ENCODE measurements at regions of chr6 and their contacts with region 1.

Region 1: GRCh38 chr6:8063761-8064637 is at the start of gene BLOC1S5:
- DNase-seq: peak; percentile 95 to 98 (median 97)
- H3K4me3 ChIP-seq: peak within 1 kb of the TSS; percentile 60 to 86 (median 80)
- H3K4me3 Mint-ChIP-seq: peak within 1 kb of the TSS; percentile 93 to 95
- H3K27ac ChIP-seq: peak within 1 kb of the TSS; percentile 73 to 94
- H3K27ac Mint-ChIP-seq: peak within 1 kb of the TSS; percentile 90 to 98 (median 97)
- H3K4me1 ChIP-seq: peaks cover 9 to 15% of the 10 kb centered on the region in 2 donors
- H3K4me1 Mint-ChIP-seq: peaks cover 10% of the 10 kb centered on the region
- H3K27me3 ChIP-seq: no peaks in the 10 kb centered on the region
- H3K27me3 Mint-ChIP-seq: peaks cover 0 to 2% (median 0%) of the 10 kb centered on the region in 3 donors
- CTCF ChIP-seq: no peak
- polyA plus RNA-seq, gene BLOC1S5: 3.7 to 11.7 (median 9.2) TPM

Region 2: DNA sequence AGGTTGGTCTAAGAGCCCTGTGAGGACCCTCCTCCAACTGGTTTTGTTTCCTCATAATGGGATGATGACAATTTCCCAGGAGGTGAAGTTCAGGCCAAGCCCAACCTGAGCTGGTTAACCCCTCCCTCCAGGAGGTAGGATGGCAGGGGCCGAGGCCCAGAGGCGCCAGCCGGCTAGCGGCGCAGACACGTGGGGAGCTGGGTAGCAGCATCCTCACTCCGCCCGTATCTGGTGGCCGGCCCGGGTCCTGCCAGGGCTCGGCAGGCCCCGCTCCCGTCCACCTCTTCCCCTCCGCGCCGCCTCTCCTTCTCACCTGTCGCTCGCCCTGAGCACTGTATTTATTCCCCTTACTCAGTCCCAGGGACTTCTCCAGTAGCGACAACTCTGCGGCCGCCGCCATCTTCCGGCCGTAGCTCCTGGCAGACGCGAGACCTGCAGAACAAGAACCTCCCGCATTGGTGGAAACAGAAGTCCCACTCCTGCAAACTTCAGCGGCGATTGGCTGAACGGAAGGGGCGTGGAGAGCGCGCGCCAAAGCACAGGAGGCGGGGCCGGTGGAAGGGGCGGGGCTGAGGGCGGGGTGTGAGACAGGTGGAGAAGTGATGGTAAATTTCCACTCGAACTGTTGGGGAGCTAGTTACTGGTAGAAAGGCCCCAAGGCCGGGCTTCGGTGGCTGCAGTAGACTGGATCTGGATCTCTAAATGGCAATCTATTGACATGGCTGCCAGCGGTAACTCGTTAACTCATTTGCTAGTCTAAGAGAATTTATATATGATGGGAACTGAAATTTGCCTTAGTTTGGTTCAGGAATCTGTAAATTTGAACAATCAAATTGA is 38.3 kb after region 1 on chr6 and contains the start of gene EEF1E1:
- intact Hi-C with region 1: loop called (anchors 2 to 5 kb)
- DNase-seq: peak; percentile 88 to 92 (median 90)
- H3K4me3 ChIP-seq: peak within 1 kb of the TSS; percentile 69 to 93 (median 72)
- H3K4me3 Mint-ChIP-seq: peak within 1 kb of the TSS; percentile 98 to 99
- H3K27ac ChIP-seq: peak within 1 kb of the TSS; percentile 25 to 82
- H3K27ac Mint-ChIP-seq: peak within 1 kb of the TSS; percentile 74 to 96 (median 94)
- H3K4me1 ChIP-seq: peaks cover 9 to 19% of the 10 kb centered on the region in 2 donors
- H3K4me1 Mint-ChIP-seq: peaks cover 22% of the 10 kb centered on the region
- H3K27me3 ChIP-seq: no peaks in the 10 kb centered on the region
- H3K27me3 Mint-ChIP-seq: peaks cover 2 to 5% (median 3%) of the 10 kb centered on the region in 3 donors
- CTCF ChIP-seq: no peak
- polyA plus RNA-seq, gene EEF1E1: 14.6 to 42.2 (median 26.2) TPM

Region 3: GRCh38 chr6:8435160-8435852 is 371.3 kb after region 1 on chr6 and contains the start of gene SLC35B3:
- intact Hi-C with region 1: loop called in 1 of 2 experiments (anchors 10 kb)
- DNase-seq: peak; percentile 92 to 97 (median 92)
- H3K4me3 ChIP-seq: peak within 1 kb of the TSS; percentile 77 to 99 (median 95)
- H3K4me3 Mint-ChIP-seq: peak within 1 kb of the TSS; percentile 93 to 96
- H3K27ac ChIP-seq: peak within 1 kb of the TSS; percentile 97
- H3K27ac Mint-ChIP-seq: peak within 1 kb of the TSS; percentile 94 to 98 (median 96)
- H3K4me1 ChIP-seq: peaks cover 13 to 32% of the 10 kb centered on the region in 2 donors
- H3K4me1 Mint-ChIP-seq: peaks cover 29% of the 10 kb centered on the region
- H3K27me3 ChIP-seq: no peaks in the 10 kb centered on the region
- H3K27me3 Mint-ChIP-seq: peaks cover 0 to 6% (median 0%) of the 10 kb centered on the region in 3 donors
- CTCF ChIP-seq: no peak
- polyA plus RNA-seq, gene SLC35B3: 7.9 to 14.0 (median 9.3) TPM